ENCODE measurements at regions of chr13 and their contacts with region 1.

Region 1: DNA sequence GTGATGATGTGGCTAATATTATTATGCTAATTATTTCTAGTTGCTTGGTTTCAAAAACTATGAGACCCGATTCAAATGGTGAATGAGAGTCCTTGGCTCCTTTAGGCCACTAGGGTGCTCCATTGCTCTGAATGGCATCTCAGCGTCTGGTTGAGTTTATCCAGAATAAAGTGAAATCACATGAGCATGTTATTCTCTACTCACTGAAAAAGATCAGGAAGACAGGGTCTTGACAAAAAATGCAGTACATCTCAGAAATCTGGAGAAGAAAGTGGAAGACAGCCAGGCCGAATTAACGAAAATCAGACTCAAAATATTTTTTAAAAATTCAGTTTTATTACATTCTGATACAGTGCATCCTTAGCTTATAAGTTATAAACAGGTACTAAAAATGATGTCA is 516.2 kb downstream of the MYO16 start:
- DNase-seq: no peak
- ATAC-seq: peak; percentile 88

Region 2: DNA sequence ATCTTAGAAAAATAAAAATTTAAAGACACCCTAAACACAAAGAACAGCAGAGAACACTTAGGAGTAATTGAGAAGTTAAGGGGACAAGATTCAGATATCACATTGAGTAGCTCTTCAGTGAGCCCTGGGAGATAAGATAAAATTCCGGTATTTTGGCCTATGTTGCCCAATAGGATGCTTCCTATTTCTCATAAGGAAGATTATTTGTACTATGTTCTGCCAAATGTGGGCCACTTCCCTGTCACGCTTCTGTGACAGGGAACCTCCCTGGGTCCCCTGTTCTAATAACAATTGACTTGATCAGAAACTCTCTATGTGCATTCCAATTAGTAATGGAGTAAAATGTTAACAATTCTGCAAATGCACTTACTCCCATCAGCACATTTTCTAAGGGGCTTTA is 205.5 kb before region 1 on chr13:
- intact Hi-C with region 1: no loop called
- DNase-seq: no peak
- ATAC-seq: no peak

Region 3: DNA sequence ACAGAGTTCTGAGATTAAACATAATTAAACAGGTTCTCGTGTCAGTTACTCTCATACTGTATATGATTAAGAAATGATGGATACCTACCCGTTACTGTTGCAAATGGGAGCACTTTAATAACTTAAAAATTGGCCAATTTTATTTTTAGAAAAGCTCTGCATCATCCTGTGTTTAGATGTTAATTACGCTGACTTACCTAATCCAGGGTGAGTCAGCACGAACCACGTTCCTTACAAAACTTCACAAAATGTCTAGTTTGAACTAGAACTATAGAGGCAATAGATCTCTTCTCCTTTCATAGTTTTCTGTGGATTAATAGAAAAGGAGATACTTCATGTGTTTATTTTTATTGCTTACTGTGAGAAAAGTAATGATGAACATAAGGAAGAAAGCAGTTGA is 152.3 kb before region 1 on chr13:
- intact Hi-C with region 1: loop called (anchors 5 kb)
- DNase-seq: no peak
- ATAC-seq: no peak